Transverse colon (tissue), 4 donors: ENCODE measurements at regions of chr6 and their contacts with region 1.

Region 1: DNA sequence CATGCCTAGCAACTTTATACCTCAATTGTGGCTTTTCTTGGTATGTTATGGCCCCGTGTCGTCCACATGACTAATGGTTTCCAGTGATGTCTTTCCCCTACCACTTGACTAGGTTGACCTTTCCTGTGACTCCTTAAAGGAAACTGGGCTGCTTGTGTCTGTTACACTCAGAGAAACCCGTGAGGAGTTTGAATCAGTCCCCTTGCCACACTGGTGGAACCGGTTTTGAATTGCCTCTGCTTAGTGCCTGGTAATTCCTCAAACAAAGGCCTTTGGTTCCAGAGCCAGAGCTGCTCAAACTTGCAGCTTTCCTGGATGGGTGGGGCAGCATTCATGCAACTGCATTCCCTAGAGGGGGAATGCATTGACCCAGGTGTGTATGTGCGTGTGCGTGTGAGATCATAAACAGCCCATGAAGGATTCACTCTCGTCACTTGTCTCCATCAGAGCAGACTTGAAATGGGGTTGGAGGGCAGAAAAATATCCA is 22.0 kb downstream of the ECT2L start:
- DNase-seq: peak; percentile 89
- H3K4me3 ChIP-seq: no peak overlapping the region
- H3K27ac ChIP-seq: peak overlapping the region; percentile 50 to 72 (median 66)
- H3K4me1 ChIP-seq: peaks cover 0 to 26% (median 13%) of the 10 kb centered on the region in 4 donors
- H3K27me3 ChIP-seq: no peaks in the 10 kb centered on the region
- CTCF ChIP-seq: no peak
- EP300 ChIP-seq: no peak
- POLR2A ChIP-seq: peak; percentile 17

Region 2: DNA sequence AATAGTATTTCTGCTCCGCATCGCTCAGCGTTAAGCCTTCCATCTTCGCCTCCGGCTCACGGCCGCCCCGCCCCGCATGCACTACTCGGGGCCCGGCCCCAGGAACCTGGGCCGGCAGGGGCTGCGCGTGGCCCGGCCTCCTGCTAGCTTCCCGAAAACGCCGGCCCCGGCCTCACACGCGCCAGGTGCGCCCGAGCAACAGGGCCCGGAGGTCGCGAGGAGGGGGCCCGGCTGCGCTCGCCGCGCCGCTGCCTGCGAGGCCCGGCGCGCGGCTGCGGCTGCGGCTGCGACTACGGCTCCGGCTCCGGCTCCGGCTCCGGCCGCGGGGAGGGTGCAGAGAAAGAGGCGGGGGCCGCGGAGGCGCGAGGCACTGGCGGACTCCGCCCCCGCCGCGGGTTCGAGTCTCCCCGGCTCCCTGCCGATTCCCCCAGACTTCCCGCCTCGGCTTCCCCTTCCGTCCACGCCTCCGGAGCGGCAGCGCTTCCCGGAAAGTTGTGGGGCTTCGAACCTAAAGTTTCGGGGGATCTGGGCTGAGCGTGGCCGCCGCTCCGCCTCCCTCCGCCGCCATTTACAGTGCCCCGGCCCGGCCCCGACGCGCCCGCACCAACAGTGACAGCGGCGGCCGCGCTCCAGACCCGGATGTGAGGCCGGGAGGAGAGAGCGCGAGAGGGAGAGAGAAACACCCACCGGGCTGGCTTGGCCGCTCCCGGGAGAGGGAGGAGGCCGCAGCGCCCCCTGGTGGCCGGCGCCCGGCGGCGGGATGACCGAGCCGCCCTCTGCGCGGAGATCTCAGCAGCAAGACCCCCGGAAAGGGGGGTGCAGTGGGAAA is 170.0 kb after region 1 on chr6 and contains the start of gene REPS1:
- in situ Hi-C with region 1: loop called in 2 of 4 experiments (anchors 5 to 10 kb)
- intact Hi-C with region 1: loop called (anchors 5 kb)
- DNase-seq: peak; percentile 93
- H3K4me3 ChIP-seq: peak within 1 kb of the TSS; percentile 79 to 94 (median 86)
- H3K27ac ChIP-seq: peak within 1 kb of the TSS; percentile 89 to 97 (median 90)
- H3K4me1 ChIP-seq: peaks cover 7 to 46% (median 24%) of the 10 kb centered on the region in 4 donors
- H3K27me3 ChIP-seq: no peaks in the 10 kb centered on the region
- CTCF ChIP-seq: peak; percentile 98 to 100 (median 99)
- EP300 ChIP-seq: no peak
- POLR2A ChIP-seq: peak; percentile 90
- total RNA-seq, gene REPS1: 33.5 to 74.4 (median 48.6) TPM

Region 3: DNA sequence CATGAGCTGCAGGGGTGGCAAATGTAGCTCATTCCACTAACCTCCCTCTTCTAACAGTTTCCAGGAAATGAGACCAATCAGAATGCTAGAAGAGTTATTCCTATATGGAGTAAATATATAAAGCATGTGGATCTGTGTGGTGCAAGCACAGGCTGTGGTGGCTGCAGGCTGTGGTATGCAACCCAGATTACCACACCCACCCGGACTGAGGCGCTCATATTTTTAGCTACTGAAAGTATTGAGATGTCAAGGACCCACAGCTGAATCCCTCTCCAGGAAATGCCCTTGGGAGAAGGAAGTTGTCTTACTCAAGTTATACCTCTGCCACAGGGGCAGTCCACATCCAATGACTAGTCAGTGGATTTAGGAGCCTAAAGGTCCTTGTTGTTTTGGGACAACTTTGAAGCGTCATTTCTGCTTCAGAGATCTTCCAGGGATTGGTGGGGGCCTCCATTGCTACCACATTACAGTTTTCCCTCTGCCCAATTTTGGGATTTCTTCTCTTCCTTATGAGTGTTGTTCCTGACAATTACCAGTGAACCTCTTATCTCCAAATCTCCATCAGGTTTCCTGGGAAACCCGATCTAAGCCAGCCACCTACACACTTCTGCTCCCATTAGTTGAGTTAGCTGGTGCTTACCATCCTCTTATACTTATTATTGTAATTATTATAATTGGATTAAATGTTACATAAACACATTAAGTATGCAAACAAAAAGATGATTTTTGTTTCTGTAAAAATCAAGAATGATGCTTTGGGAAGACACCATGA is 182.3 kb after region 1 on chr6:
- in situ Hi-C with region 1: loop called in 1 of 4 experiments (anchors 5 kb)
- intact Hi-C with region 1: no loop called
- DNase-seq: no peak
- H3K4me3 ChIP-seq: no peak overlapping the region
- H3K27ac ChIP-seq: no peak overlapping the region
- H3K4me1 ChIP-seq: peaks cover 0 to 4% (median 0%) of the 10 kb centered on the region in 4 donors
- H3K27me3 ChIP-seq: no peaks in the 10 kb centered on the region
- CTCF ChIP-seq: no peak
- EP300 ChIP-seq: no peak
- POLR2A ChIP-seq: no peak

Region 4: DNA sequence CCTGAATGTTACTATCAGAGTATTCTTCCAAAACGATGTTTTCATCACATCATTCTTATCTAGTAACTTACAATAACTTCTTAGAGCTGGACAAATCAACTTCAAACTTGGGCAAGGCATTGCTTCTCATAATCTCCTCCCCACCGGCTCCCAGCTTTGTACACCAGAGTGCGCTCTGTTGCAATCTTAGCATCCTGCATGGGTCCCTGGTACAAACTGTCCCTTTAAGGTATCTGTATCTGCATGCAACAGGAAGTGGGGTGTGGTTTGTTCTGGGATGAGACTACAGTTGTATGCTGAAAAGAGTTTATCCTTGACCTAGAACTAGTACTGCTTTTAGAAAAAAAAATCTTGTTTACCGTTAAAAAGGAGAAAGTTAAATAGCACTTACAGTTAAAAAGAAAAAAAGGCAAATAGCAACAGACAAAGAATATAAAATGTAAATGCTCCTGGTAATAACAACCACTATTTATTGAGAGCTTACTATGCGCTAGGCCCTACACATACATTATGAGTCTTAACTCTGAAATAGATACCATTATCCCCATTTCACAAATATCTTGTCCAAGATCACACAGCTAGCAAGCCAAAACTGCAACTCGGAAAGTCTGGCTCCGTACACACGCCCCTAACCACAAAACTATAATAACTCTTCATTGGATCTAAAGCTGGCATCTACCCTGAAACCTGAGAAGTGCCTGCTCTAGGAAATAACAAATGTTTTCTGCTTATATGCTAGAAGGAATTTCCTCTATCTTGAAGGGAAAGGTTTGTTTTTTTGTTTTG is 307.2 kb after region 1 on chr6:
- in situ Hi-C with region 1: loop called in 1 of 4 experiments (anchors 25 kb)
- intact Hi-C with region 1: no loop called
- DNase-seq: peak; percentile 82
- H3K4me3 ChIP-seq: no peak overlapping the region
- H3K27ac ChIP-seq: peak overlapping the region; percentile 19 to 58 (median 36)
- H3K4me1 ChIP-seq: peaks cover 0 to 6% (median 0%) of the 10 kb centered on the region in 4 donors
- H3K27me3 ChIP-seq: no peaks in the 10 kb centered on the region
- CTCF ChIP-seq: peak; percentile 36 to 67 (median 55)
- EP300 ChIP-seq: no peak
- POLR2A ChIP-seq: no peak

Region 5: DNA sequence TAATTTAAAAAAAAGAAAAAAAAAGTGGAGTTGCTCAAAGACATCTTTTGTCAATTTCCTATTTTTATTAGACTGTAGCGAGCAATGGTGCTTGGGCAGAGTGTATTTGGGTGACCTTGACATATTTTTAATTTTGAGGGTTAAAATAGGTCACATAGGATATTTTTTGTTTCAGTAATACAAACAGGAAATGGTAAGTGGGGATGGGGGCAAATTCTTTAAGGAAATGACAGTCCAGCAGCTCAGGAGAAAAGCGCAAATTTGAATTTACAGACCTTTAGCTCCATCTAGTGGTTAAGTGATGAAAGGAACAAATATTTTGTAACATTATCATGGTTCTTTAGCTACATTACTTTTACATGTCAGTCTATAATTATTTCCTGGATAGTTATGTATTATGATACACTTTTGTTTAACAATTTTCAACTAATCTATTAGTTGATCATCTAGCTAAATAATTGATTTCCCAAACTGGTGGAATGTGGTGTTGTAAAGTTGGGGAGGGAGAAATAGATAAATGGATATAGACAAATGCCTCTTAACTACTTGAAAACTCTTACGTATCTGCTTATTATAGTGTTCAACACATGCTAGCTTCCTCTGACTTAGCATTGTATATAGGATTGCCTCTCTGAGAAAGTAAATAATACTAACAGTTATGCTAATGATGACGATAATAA is 546.6 kb after region 1 on chr6:
- in situ Hi-C with region 1: loop called (anchors 5 to 25 kb)
- intact Hi-C with region 1: loop called (anchors 2 kb)
- DNase-seq: no peak
- H3K4me3 ChIP-seq: no peak overlapping the region
- H3K27ac ChIP-seq: no peak overlapping the region
- H3K4me1 ChIP-seq: peaks cover 0 to 6% (median under 1%) of the 10 kb centered on the region in 4 donors
- H3K27me3 ChIP-seq: no peaks in the 10 kb centered on the region
- CTCF ChIP-seq: peak; percentile 71 to 88 (median 73)
- EP300 ChIP-seq: no peak
- POLR2A ChIP-seq: no peak

Region 6: GRCh38 chr6:139369568-139370282 is 551.9 kb after region 1 on chr6:
- in situ Hi-C with region 1: loop called (anchors 5 to 25 kb)
- intact Hi-C with region 1: no loop called
- DNase-seq: no peak
- H3K4me3 ChIP-seq: peak overlapping the region in 1 of 4 donors; percentile 87
- H3K27ac ChIP-seq: peak overlapping the region; percentile 92 to 99 (median 96)
- H3K4me1 ChIP-seq: peaks cover 7 to 31% (median 23%) of the 10 kb centered on the region in 4 donors
- H3K27me3 ChIP-seq: no peaks in the 10 kb centered on the region
- CTCF ChIP-seq: peak; percentile 70 to 80 (median 75)
- EP300 ChIP-seq: no peak
- POLR2A ChIP-seq: no peak